Right ventricle myocardium superior (tissue), 1 donor: ENCODE measurements at regions of chr10 and their contacts with region 1.

Region 1: GRCh38 chr10:48506147-48506917 is 98.5 kb downstream of the ARHGAP22 start:
- DNase-seq: no peak
- ATAC-seq: no peak

Region 2: DNA sequence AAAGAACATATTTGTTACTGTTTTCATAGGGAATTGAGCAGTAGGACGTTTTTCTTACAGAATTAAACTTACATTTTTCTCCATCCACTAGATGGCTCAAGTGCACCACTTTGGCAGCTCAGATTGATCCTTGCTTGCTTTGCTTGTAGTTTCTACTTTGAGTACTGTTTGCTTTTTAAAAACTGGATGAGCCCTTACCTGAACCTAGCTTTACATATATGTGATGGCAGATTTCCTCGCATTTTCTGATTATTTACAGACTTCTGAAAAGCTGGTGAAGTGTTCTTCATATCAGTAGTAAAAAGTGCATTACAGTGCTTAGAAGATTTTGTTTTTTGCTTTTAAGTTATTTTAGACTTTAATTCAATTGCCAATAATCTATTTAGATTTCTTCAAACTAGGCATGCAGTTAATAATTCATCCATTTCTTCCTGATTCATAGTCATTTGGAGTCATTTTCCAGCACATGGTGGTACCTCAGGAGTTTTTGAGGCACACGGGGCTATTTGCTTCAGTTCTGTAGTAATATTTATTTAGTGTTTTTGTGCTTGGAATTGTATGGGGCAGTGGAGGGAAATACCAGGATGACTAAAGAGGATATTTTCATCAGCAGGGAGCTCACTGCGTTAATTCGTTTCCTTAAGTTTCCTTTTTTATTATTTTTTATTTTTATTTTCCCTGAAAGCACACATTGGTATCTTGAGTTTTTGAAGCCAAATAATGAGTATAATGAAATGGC is 142.5 kb before region 1 on chr10:
- intact Hi-C with region 1: loop called (anchors 5 kb)
- DNase-seq: no peak
- ATAC-seq: peak; percentile 71

Region 3: GRCh38 chr10:48414778-48415177 is 91.6 kb before region 1 on chr10:
- intact Hi-C with region 1: no loop called
- DNase-seq: no peak
- ATAC-seq: no peak